Heart left ventricle (tissue), 16 donors: ENCODE measurements at regions of chr11 and their contacts with region 1.

Region 1: DNA sequence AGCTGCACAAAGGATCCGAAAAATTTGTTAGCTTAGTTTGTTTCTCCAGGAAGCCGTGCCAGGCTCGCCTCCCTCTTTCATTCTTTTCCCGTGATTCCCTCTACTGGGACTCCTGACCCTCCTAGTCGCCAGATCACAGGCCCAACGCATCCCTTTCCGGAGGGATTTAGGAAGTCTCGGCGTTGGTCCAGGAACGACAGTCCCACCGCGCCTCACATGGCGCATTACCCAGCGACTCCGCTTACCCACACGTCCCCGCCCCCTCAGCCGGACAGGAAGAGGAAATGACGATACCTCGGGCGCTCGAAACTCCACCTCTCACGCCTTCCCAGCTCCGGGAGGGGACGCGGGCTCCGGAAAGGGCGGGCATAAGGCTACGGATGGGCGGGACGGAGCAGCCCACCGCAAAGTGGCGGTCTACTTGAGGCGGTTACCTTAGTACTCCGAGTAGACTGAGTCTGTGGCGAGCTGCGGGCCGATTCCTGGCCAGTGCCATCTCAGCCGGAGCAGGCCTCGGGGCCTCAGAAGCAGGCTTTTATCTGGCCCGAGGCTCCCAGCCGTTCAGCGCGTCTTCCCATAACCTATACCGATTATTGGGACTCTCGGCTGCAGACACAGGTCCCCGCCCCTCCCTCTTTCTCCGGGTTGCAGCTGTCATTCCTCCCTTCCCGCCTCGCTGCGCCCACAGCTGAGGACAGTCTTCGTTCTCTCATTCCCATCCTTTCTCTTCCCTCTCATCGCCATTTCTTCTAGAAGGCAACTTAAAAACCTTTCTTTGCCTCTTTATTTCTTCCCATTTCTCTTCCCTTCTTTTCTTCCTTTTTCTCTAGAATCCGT is at the start of gene CCDC15:
- DNase-seq: peak; percentile 98 to 99 (median 98)
- ATAC-seq: peak; percentile 100
- H3K4me3 ChIP-seq: peak within 1 kb of the TSS; percentile 48 to 84 (median 74)
- H3K27ac ChIP-seq: peak within 1 kb of the TSS in 11 of 12 donors; percentile 63 to 90 (median 85)
- H3K4me1 ChIP-seq: peaks cover 0 to 15% (median 8%) of the 10 kb centered on the region in 12 donors
- H3K27me3 ChIP-seq: no peaks in the 10 kb centered on the region
- CTCF ChIP-seq: no peak
- POLR2A ChIP-seq: peak in 1 of 2 donors; percentile 78
- total RNA-seq, gene CCDC15: 0.12 to 1.8 (median 0.19) TPM

Region 2: GRCh38 chr11:124842305-124842704 is 111.7 kb before region 1 on chr11:
- intact Hi-C with region 1: no loop called
- DNase-seq: no peak
- ATAC-seq: no peak
- H3K4me3 ChIP-seq: no peak overlapping the region
- H3K27ac ChIP-seq: no peak overlapping the region
- H3K4me1 ChIP-seq: peaks cover 6 to 22% (median 16%) of the 10 kb centered on the region in 12 donors
- H3K27me3 ChIP-seq: peaks cover 52 to 97% (median 90%) of the 10 kb centered on the region in 9 donors
- CTCF ChIP-seq: no peak
- POLR2A ChIP-seq: no peak

Region 3: GRCh38 chr11:124920870-124921609 is 32.9 kb before region 1 on chr11:
- intact Hi-C with region 1: no loop called
- DNase-seq: peak; percentile 82 to 91 (median 87)
- ATAC-seq: peak; percentile 59 to 87 (median 82)
- H3K4me3 ChIP-seq: peak overlapping the region; percentile 13 to 64 (median 54)
- H3K27ac ChIP-seq: peak overlapping the region; percentile 62 to 88 (median 72)
- H3K4me1 ChIP-seq: peaks cover 0 to 17% (median 4%) of the 10 kb centered on the region in 12 donors
- H3K27me3 ChIP-seq: peaks cover 0 to 10% (median 3%) of the 10 kb centered on the region in 9 donors
- CTCF ChIP-seq: peak in 5 of 12 donors; percentile 10 to 30 (median 15)
- POLR2A ChIP-seq: peak in 1 of 2 donors; percentile 8

Region 4: DNA sequence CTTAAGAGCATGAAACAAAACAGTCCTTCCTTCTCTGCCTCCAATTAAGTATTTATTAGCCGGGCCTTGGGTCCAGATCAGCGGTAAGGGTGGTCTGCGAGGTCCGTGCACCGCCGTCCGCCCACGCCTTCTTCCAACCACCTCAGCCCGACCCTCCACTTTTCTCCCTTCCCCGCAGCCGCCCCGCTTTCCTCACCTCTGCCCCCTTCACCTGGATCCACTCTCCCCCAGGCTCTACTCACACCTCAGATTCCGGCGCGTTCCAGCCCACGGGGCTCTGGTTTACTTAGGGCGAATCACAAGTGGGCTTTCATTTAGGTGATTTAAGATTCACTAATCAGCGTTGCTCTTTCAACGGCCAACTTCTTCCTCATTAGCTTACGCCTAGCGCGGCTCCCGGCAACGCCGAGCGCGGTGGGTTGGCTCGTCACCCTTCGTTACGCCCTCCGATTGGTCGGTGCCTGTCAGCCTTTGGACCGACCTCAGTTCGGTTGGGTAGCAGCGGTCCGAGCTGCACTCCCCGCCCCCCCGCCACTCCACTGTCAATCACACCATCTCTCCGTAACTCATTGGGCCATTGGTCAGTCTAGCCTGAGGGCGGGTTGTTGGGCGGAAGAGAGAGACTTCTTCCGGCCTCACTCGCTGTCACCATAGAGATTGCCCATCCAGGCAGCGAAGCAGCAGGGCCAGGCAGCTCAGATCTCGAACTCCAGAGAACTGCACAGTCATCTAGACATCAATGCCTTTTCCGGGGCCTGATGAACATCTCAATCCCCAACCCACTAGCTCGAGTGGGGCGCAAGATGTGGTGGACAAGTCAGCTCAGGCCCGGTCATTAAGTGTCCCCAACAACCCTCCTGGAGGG is 157.6 kb after region 1 on chr11 and contains the start of gene TMEM218:
- intact Hi-C with region 1: loop called in 4 of 10 experiments (anchors 5 to 10 kb)
- DNase-seq: peak; percentile 99 to 100 (median 100)
- ATAC-seq: peak; percentile 100
- H3K4me3 ChIP-seq: peak within 1 kb of the TSS; percentile 53 to 97 (median 81)
- H3K27ac ChIP-seq: peak within 1 kb of the TSS in 11 of 12 donors; percentile 52 to 84 (median 78)
- H3K4me1 ChIP-seq: peaks cover 0 to 17% (median 7%) of the 10 kb centered on the region in 12 donors
- H3K27me3 ChIP-seq: no peaks in the 10 kb centered on the region
- CTCF ChIP-seq: no peak
- POLR2A ChIP-seq: no peak
- total RNA-seq, gene TMEM218: 5.3 to 11.3 (median 6.8) TPM

Region 5: GRCh38 chr11:125404776-125405435 is 450.9 kb after region 1 on chr11:
- intact Hi-C with region 1: loop called in 1 of 10 experiments (anchors 10 kb)
- DNase-seq: peak; percentile 61 to 84 (median 74)
- ATAC-seq: peak; percentile 83 to 90 (median 89)
- H3K4me3 ChIP-seq: no peak overlapping the region
- H3K27ac ChIP-seq: no peak overlapping the region
- H3K4me1 ChIP-seq: peaks cover 0 to 26% (median 8%) of the 10 kb centered on the region in 12 donors
- H3K27me3 ChIP-seq: no peaks in the 10 kb centered on the region
- CTCF ChIP-seq: peak; percentile 87 to 98 (median 96)
- POLR2A ChIP-seq: no peak

Region 6: GRCh38 chr11:125568970-125569914 is 615.3 kb after region 1 on chr11 and contains the start of gene EI24:
- intact Hi-C with region 1: loop called in 1 of 10 experiments (anchors 10 kb)
- DNase-seq: peak; percentile 92 to 96 (median 95)
- ATAC-seq: peak; percentile 100
- H3K4me3 ChIP-seq: peak within 1 kb of the TSS; percentile 84 to 100 (median 96)
- H3K27ac ChIP-seq: peak within 1 kb of the TSS; percentile 71 to 93 (median 87)
- H3K4me1 ChIP-seq: peaks cover 0 to 22% (median 10%) of the 10 kb centered on the region in 12 donors
- H3K27me3 ChIP-seq: no peaks in the 10 kb centered on the region
- CTCF ChIP-seq: peak; percentile 62 to 93 (median 75)
- POLR2A ChIP-seq: peak; percentile 22 to 88
- total RNA-seq, gene EI24: 47.7 to 72.4 (median 53.8) TPM